Calu3 (cell line): ENCODE measurements at regions of chr10 and their contacts with region 1.

Region 1: GRCh38 chr10:92834986-92835385 is 13.3 kb upstream of the EXOC6 start:
- DNase-seq: no peak
- H3K4me3 Mint-ChIP-seq: no peak overlapping the region
- H3K27ac Mint-ChIP-seq: no peak overlapping the region
- H3K4me1 Mint-ChIP-seq: peaks cover 19% of the 10 kb centered on the region
- H3K27me3 Mint-ChIP-seq: no peaks in the 10 kb centered on the region
- CTCF ChIP-seq: no peak

Region 2: DNA sequence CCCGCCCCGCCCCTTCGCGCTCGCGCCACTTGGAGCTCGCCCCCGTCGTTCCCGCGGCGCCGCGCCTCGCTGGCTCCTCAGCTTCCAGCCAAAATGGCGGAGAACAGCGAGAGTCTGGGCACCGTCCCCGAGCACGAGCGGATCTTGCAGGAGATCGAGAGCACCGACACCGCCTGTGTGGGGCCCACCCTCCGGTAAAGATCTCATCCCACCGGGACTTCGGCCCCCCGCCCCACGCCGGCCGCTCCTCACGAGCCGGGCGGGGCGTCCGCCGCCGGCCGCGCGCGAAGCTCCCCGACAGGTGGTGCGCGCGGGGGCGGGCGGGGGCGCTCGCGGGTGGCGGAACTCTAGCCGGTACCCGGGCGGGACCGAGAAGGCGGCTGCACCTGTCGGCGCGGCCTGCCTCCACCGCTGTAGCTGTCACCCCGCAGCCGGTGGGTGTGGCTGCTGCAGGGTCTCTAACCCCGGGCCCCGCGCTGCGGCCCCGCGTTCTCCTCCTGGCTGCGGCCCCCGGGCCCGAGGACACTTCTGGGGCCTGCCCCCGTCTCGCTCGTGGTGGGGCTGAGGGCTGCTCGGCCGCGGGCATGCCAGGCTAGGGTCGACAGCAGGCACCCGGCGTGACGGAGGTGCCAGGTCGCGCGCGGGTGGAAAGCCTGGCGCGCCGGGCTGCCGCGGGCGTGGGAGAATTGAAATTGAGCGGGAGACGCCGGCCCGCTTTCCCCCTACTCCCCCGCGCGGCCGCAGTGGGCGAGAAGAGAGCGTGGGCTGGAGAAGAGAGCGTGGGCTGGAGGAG is 13.7 kb after region 1 on chr10 and contains the start of gene EXOC6:
- CTCF ChIA-PET with region 1: interaction called, 10 read pairs
- intact Hi-C with region 1: no loop called
- DNase-seq: peak; percentile 82
- H3K4me3 Mint-ChIP-seq: peak within 1 kb of the TSS; percentile 90
- H3K27ac Mint-ChIP-seq: peak within 1 kb of the TSS; percentile 56
- H3K4me1 Mint-ChIP-seq: peaks cover 19% of the 10 kb centered on the region
- H3K27me3 Mint-ChIP-seq: no peaks in the 10 kb centered on the region
- CTCF ChIP-seq: no peak
- total RNA-seq, gene EXOC6: 19.2 TPM in 2 replicates